ENCODE measurements at regions of chr20 and their contacts with region 1.

Region 1: DNA sequence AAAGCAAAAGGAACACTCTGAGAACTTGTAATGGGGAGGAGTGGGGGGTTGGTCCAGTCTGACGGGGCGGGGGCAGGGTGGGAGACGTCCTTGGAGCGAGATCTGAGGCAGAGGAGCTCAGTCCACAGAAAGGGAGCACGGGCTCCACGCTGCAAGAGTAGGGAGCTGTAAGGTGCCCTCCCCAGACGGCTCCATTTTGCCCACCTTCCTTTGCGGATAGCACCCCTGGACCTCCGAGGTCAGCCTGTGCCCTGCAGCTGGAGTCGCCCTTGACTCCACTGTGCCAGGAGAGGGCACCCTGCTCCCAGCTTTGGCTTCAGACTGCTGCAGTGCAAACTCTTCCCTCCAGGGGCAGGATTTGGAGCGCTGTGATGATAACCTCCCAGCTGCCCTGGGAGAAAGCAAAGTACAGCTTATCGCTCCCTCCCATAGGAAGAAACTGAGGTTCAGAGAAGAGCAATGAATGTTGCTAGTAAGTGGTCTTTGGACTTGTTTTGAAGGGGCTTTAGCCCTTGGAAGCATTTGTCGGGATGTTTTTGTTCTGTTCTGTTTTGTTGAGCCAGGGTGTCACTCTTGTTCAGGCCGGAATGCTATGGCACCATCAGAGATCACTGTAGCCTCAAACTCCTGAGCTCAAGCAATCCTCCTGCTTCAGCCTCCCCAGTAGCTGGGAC is 9.5 kb upstream of the AHCY start:
- DNase-seq: peak; percentile 93
- ATAC-seq: peak; percentile 100
- H3K4me3 Mint-ChIP-seq: peak overlapping the region; percentile 22
- H3K27ac Mint-ChIP-seq: no peak overlapping the region
- H3K4me1 Mint-ChIP-seq: peaks cover 21% of the 10 kb centered on the region
- H3K27me3 Mint-ChIP-seq: peaks cover 24% of the 10 kb centered on the region

Region 2: GRCh38 chr20:34264141-34264540 is 48.5 kb before region 1 on chr20:
- CTCF ChIA-PET with region 1: no interaction called
- POLR2A ChIA-PET with region 1: no interaction called
- DNase-seq: no peak
- ATAC-seq: no peak
- H3K4me3 Mint-ChIP-seq: no peak overlapping the region
- H3K27ac Mint-ChIP-seq: no peak overlapping the region
- H3K4me1 Mint-ChIP-seq: peaks cover 8% of the 10 kb centered on the region
- H3K27me3 Mint-ChIP-seq: no peaks in the 10 kb centered on the region

Region 3: GRCh38 chr20:34334654-34335407 is 22.1 kb after region 1 on chr20:
- CTCF ChIA-PET with region 1: interaction called, 21 read pairs
- POLR2A ChIA-PET with region 1: no interaction called
- DNase-seq: no peak
- ATAC-seq: no peak
- H3K4me3 Mint-ChIP-seq: no peak overlapping the region
- H3K27ac Mint-ChIP-seq: no peak overlapping the region
- H3K4me1 Mint-ChIP-seq: peaks cover 3% of the 10 kb centered on the region
- H3K27me3 Mint-ChIP-seq: no peaks in the 10 kb centered on the region

Region 4: DNA sequence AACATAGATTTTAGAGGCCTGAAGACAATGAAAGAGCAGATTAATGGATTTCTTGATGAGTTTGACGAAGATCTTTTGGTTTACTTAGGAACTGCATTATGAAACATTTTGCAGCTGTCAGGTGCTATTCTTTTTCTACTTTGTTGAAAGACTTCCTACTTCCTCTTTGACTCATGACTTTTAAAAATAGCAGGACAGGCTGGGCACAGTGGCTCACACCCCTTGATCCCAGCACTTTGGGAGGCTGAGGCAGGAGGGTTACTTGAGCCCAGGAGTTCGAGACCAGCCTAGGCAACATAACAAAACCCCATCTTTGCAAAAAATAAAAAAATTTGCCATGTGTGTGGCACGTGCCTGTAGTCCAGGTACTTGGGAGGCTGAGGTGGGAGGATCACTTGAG is 102.4 kb after region 1 on chr20:
- CTCF ChIA-PET with region 1: interaction called, 21 read pairs
- POLR2A ChIA-PET with region 1: no interaction called
- DNase-seq: no peak
- ATAC-seq: no peak
- H3K4me3 Mint-ChIP-seq: no peak overlapping the region
- H3K27ac Mint-ChIP-seq: peak overlapping the region; percentile 26
- H3K4me1 Mint-ChIP-seq: peaks cover 23% of the 10 kb centered on the region
- H3K27me3 Mint-ChIP-seq: no peaks in the 10 kb centered on the region

Region 5: DNA sequence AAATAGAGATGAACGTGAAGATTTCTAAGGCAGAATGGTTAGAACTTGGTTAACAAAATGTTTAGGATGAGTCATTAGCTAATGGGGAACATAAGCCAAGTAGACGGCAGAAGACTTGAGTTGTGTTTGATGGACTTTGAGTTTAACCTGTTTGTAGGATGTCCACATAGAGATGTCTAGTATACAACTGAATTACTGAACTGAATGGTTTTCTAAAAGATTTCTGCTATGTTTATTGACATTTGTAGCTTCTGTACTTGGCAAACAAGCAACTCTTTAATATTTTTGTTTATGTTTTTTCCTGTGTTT is 149.1 kb after region 1 on chr20:
- CTCF ChIA-PET with region 1: interaction called, 79 read pairs
- POLR2A ChIA-PET with region 1: no interaction called
- DNase-seq: no peak
- ATAC-seq: no peak
- H3K4me3 Mint-ChIP-seq: no peak overlapping the region
- H3K27ac Mint-ChIP-seq: no peak overlapping the region
- H3K4me1 Mint-ChIP-seq: no peaks in the 10 kb centered on the region
- H3K27me3 Mint-ChIP-seq: no peaks in the 10 kb centered on the region

Region 6: DNA sequence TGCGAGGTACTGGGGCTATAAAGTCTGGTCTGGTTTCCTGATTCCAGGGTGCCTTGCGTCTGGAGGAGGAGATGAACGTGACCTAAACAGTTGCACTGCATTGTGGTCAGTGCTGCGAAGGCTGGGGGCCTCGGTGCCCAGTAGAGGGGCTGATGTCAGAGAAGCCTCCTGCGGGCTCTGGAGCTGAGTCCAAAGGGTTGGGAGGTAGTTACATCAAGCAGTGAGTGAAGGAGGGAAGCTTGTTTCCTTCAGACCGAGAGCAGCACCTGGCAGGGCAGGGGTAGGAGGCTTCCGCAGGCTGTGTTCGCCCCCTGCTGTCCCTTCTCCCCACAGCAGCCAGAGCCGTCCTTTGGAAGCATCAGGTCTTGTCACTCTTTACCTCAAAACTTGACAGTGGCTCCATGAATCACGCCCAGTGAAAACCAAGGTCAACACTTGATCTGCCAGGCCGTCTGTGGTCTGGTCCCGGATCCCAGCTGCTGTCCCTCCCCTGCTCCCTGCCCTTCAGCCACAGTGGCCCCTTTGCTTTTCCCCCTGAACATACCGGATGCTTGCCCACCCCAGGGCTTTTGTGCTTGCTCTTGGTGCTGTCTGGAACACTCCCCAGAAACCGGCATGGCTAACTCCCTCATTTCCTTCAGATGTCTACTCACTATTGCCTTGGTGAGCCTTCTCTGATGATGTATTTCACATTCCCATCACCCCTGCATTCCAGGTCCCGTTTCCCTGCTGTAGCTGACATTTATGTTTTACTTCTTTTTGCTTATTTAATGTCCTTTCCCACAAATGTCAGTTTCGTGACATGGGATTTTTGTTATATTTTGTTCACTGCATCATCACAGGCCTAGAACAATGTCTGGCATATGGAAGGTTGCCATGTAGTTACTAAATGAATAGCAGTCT is 210.5 kb after region 1 on chr20:
- CTCF ChIA-PET with region 1: interaction called, 124 read pairs
- POLR2A ChIA-PET with region 1: interaction called, 6 read pairs
- DNase-seq: peak; percentile 63
- ATAC-seq: peak; percentile 83
- H3K4me3 Mint-ChIP-seq: no peak overlapping the region
- H3K27ac Mint-ChIP-seq: no peak overlapping the region
- H3K4me1 Mint-ChIP-seq: peaks cover 15% of the 10 kb centered on the region
- H3K27me3 Mint-ChIP-seq: no peaks in the 10 kb centered on the region

Region 7: GRCh38 chr20:34558320-34559218 is 245.9 kb after region 1 on chr20 and contains the start of gene MAP1LC3A:
- CTCF ChIA-PET with region 1: interaction called, 11 read pairs
- POLR2A ChIA-PET with region 1: no interaction called
- DNase-seq: peak; percentile 92
- ATAC-seq: peak; percentile 87
- H3K4me3 Mint-ChIP-seq: peak within 1 kb of the TSS; percentile 76
- H3K27ac Mint-ChIP-seq: peak within 1 kb of the TSS; percentile 84
- H3K4me1 Mint-ChIP-seq: peaks cover 13% of the 10 kb centered on the region
- H3K27me3 Mint-ChIP-seq: no peaks in the 10 kb centered on the region
- total RNA-seq, gene MAP1LC3A: 1.4 to 1.6 TPM

Measured in activated CD8-positive, alpha-beta T cell treated with anti-CD3 and anti-CD28 coated beads, Interleukin-2, amount 10 ng/mL, durations not matched to agents 7 days and 5 days (primary cell).